A549 (cell line): ENCODE measurements at regions of chr2 and their contacts with region 1.

Region 1: GRCh38 chr2:170815746-170816503 is 762 bp upstream of the GAD1 start:
- DNase-seq: peak; percentile 67
- ATAC-seq: peak; percentile 51 to 80
- H3K4me3 ChIP-seq: peak overlapping the region; percentile 43
- H3K27ac ChIP-seq: no peak overlapping the region
- H3K4me1 ChIP-seq: peaks cover 23% of the 10 kb centered on the region
- CTCF ChIP-seq: peak; percentile 85
- EP300 ChIP-seq: no peak
- POLR2A ChIP-seq: no peak
- RAD21 ChIP-seq: peak; percentile 85 to 92

Region 2: DNA sequence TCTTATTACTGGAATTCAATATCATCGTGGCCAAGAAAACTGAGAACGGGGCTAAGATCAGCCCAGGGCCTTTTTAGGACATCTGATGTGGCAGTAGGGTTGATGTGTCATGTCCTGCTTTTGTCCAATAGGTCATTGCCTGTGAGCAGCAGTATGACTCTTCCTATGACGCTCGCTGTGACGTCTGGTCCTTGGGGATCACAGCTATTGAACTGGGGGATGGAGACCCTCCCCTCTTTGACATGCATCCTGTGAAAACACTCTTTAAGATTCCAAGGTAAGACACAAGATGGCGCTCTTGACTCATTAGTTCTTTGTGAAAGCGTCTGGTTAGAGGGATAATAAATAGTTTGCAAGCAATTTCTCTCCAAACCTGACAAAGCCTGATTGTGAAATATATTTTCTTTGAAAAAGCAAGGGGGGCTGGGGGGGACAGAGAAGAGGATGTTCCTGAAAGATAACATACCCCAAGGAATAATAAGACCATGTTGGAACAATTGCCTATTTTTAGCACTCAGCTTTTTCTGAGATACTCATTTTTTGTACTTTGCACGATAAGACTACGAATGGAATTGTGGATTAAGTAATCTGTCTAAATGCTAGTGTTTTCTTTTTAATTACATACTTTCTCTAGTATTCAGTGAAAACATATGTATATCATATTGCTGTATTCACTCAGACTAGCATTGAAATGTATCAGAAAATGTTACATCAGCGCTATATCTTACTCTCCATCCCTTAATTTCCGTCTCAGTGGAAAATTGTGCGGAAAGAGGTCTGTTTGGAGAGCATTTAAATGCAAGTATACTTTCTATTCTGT is 579.9 kb before region 1 on chr2:
- CTCF ChIA-PET with region 1: interaction called, 17 read pairs
- POLR2A ChIA-PET with region 1: no interaction called
- DNase-seq: peak; percentile 16 to 61
- ATAC-seq: peak; percentile 57 to 86; a peak in 4 of 6 replicates
- H3K4me3 ChIP-seq: no peak overlapping the region
- H3K27ac ChIP-seq: no peak overlapping the region
- H3K4me1 ChIP-seq: no peaks in the 10 kb centered on the region
- CTCF ChIP-seq: peak; percentile 69
- EP300 ChIP-seq: no peak
- POLR2A ChIP-seq: no peak
- RAD21 ChIP-seq: peak; percentile 77 to 80

Region 3: DNA sequence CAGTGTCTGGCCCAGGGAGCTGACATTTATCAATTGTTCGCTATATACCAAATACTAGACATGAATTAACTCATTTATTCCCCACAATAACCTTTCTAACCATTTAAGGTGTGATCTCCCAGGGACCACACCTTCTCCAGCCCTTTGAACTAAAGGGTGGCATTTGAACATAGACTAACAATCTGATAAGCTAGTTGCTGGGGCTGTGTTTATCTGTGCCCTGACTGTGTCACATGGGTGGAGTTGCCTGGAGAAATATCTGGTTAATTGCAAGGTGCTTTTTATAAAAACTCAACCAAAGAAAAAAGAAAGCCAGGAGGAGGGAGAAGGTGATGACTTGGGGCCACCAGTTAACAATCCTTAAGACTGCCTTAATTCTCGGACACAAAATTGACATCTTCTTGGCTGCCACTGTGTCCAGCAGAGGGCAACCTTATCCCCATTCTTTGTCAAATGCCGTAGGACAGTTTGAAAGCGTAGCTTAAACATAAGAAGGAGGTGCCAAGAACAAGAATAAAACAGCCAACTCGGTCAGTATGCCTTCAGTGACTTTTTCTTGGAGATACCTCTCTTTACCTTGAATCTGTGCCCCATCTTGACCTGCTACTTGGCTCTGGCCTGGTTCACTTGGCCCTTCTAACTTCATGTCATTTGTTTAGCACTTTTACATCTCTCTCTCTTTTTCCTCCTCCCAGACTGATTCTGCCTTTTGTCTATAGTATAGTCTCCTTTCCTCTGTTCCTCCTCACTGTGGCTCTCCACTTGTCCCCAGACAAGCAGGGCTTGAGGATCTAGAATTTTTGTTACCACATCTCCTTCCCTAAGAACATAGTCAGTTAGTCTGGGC is 454.6 kb before region 1 on chr2:
- CTCF ChIA-PET with region 1: interaction called, 31 read pairs
- POLR2A ChIA-PET with region 1: no interaction called
- DNase-seq: peak; percentile 17 to 64
- ATAC-seq: peak; percentile 92 to 97
- H3K4me3 ChIP-seq: no peak overlapping the region
- H3K27ac ChIP-seq: no peak overlapping the region
- H3K4me1 ChIP-seq: no peaks in the 10 kb centered on the region
- CTCF ChIP-seq: peak; percentile 72
- EP300 ChIP-seq: no peak
- POLR2A ChIP-seq: no peak
- RAD21 ChIP-seq: peak; percentile 55 to 58

Region 4: DNA sequence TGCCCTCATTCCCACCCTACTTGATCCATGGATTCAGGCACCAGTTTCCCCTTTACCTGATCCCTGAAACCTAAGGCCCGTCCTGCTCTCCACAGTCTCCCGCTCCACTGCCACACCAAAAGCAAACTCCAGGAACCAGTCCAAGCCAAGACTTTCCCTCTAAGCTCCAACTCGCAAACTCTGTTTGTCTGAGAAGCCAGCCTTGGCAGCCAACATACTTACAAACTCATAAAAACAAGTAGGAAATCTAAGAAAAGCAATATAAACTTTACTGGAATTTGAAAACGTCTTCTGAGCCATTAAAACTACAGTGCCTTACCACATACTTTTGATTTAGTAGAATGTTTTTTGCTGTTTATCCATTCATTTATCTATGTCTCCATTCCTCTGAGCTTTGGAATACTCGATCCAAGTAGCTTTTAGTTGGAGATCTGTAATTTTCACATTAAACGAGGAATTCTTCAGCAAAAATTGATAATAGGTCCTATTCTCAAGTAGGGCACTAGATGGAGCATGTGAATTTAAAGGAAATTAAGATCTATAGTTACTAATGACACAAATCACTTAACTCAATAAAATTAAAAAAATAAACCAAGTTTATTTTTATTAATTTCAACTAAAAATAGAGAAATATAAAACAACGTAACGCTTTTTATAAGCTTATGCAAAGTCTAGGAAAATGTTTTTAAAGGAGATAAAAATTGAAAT is 438.3 kb before region 1 on chr2:
- CTCF ChIA-PET with region 1: interaction called, 95 read pairs
- POLR2A ChIA-PET with region 1: no interaction called
- DNase-seq: no peak
- ATAC-seq: no peak
- H3K4me3 ChIP-seq: no peak overlapping the region
- H3K27ac ChIP-seq: no peak overlapping the region
- H3K4me1 ChIP-seq: no peaks in the 10 kb centered on the region
- CTCF ChIP-seq: peak; percentile 19; the same call in 2 of the 3 replicates
- EP300 ChIP-seq: no peak
- POLR2A ChIP-seq: no peak
- RAD21 ChIP-seq: 0 out of 5 replicates have a peak, but pooled peaks of 1 of the 2 experiments have one; percentile 8

Region 5: DNA sequence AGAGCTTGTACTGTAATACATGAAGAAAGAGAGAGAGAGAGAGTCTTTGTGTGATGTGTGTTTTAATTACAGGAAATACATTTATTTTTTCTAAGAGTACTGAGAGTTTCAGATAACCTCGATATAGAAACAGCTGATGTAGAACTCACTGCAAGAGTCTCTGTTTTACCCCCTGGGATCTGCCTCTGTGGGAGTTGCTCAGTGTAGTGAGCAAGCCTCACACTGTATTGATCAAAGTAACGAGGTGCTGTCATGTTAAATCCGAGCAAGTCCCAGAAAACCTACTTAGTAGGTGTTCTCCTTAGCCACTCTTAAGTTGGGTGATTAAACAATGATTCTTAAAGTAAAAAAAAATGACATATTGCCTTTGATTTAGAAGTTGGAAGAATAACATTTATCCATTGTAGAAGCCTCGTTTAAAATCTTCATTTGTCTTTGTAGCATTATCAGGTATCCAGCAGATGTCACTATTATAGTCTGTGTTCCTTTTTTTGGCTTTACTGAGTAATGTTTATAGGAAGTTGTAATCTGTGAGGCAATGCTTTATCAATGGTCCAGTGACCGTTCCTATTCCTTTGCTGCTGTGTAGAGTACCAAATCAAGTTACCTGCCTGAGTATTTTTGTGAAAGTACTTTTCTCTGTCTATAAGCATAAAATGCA is 419.0 kb before region 1 on chr2:
- CTCF ChIA-PET with region 1: interaction called, 91 read pairs
- POLR2A ChIA-PET with region 1: no interaction called
- DNase-seq: peak in 1 of 2 experiments; percentile 19
- ATAC-seq: peak; percentile 66 to 71; a peak in 5 of 6 replicates
- H3K4me3 ChIP-seq: no peak overlapping the region
- H3K27ac ChIP-seq: no peak overlapping the region
- H3K4me1 ChIP-seq: no peaks in the 10 kb centered on the region
- CTCF ChIP-seq: peak; percentile 53
- EP300 ChIP-seq: no peak
- POLR2A ChIP-seq: no peak
- RAD21 ChIP-seq: peak; percentile 44 to 53; a peak in 3 of 5 replicates

Region 6: DNA sequence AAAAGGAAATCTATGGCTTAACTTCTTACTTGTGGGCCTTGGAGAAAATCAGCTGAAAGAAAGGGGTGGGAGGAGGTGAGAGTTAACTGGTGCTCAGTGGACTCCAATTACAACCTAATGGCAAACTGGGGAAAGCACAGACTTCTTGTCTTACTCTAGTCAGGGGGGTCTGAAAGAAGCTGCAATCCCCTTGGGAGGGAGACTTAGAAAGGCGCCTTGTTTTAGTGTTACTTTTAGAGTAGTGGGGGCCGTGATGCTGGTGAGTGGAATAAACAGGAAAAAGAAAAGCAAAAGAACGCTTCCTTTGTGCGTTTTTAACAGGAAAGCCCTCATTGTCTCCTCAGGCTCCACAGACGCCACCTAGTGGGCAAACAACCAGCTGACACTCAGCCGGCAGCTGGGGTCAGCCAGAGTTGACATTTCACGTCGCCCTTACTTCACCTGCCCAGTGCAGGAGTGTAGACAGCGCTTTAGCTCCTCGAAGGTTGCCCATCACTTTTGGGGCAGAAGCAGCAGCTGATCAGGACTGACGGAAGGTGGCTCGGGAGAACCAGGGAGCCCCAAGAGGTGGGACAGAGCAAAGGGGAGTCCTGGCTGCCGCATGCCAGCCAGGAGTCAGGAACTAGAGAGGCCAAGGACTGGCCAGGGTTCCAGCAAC is 57.2 kb after region 1 on chr2:
- CTCF ChIA-PET with region 1: interaction called, 10 read pairs
- POLR2A ChIA-PET with region 1: no interaction called
- DNase-seq: peak; percentile 71 to 84
- ATAC-seq: peak; percentile 95 to 99
- H3K4me3 ChIP-seq: no peak overlapping the region
- H3K27ac ChIP-seq: peak overlapping the region; percentile 28 to 76; a peak in 3 of 6 replicates
- H3K4me1 ChIP-seq: no peaks in the 10 kb centered on the region
- CTCF ChIP-seq: peak; percentile 87
- EP300 ChIP-seq: no peak
- POLR2A ChIP-seq: no peak
- RAD21 ChIP-seq: peak; percentile 50 to 57